HCT116 (cell line): ENCODE measurements at regions of chrX and their contacts with region 1.

Region 1: GRCh38 chrX:19887911-19888879 is 795 bp upstream of the SH3KBP1 start:
- DNase-seq: peak; percentile 53
- ATAC-seq: peak; percentile 76
- H3K4me3 ChIP-seq: peak overlapping the region; percentile 39 to 54
- H3K27ac ChIP-seq: peak overlapping the region; percentile 44; the same call in 1 of the 2 replicates
- H3K4me1 ChIP-seq: peaks cover 13 to 45% of the 10 kb centered on the region in 2 experiments
- H3K27me3 ChIP-seq: no peaks in the 10 kb centered on the region
- CTCF ChIP-seq: peak in 2 of 3 experiments; percentile 45 to 47; a peak in 3 of 6 replicates
- POLR2A ChIP-seq: no peak
- RAD21 ChIP-seq: no peak

Region 2: GRCh38 chrX:19535476-19535875 is 352.7 kb before region 1 on chrX:
- CTCF ChIA-PET with region 1: no interaction called
- POLR2A ChIA-PET with region 1: no interaction called
- RAD21 ChIA-PET with region 1: no interaction called
- intact Hi-C with region 1: loop called (anchors 10 kb)
- DNase-seq: no peak
- ATAC-seq: no peak
- H3K4me3 ChIP-seq: no peak overlapping the region
- H3K27ac ChIP-seq: no peak overlapping the region
- H3K4me1 ChIP-seq: no peaks in the 10 kb centered on the region
- H3K27me3 ChIP-seq: no peaks in the 10 kb centered on the region
- CTCF ChIP-seq: peak; percentile 12 to 27 (median 21); a peak in 3 of 6 replicates
- POLR2A ChIP-seq: no peak
- RAD21 ChIP-seq: peak; percentile 34; the same call in 1 of the 2 replicates

Region 3: DNA sequence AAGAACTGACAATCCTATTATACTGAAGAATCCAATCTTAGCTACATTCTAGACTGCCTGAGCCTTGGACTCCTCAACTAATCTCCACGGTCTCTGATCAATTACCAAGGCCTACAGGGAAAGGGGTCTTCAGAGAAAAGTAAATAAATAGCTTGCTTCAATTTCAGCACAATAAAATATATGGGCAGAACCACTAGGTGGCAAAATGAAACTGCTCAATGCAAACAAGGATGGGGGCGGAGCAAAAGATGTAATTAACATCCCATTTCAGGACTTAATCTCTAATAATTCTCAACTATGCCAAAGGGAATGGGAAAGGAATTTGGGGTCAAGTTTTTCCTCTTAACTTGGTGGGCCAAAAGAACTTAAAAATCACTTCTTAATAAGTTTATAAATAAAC is 294.5 kb before region 1 on chrX:
- CTCF ChIA-PET with region 1: interaction called, 5 read pairs
- POLR2A ChIA-PET with region 1: no interaction called
- RAD21 ChIA-PET with region 1: interaction called in 1 of 2 experiments, 3 read pairs
- intact Hi-C with region 1: loop called (anchors 5 kb)
- DNase-seq: peak; percentile 3
- ATAC-seq: no peak
- H3K4me3 ChIP-seq: no peak overlapping the region
- H3K27ac ChIP-seq: no peak overlapping the region
- H3K4me1 ChIP-seq: no peaks in the 10 kb centered on the region
- H3K27me3 ChIP-seq: no peaks in the 10 kb centered on the region
- CTCF ChIP-seq: peak; percentile 22 to 49 (median 45); a peak in 4 of 6 replicates
- POLR2A ChIP-seq: no peak
- RAD21 ChIP-seq: peak; percentile 69

Region 4: DNA sequence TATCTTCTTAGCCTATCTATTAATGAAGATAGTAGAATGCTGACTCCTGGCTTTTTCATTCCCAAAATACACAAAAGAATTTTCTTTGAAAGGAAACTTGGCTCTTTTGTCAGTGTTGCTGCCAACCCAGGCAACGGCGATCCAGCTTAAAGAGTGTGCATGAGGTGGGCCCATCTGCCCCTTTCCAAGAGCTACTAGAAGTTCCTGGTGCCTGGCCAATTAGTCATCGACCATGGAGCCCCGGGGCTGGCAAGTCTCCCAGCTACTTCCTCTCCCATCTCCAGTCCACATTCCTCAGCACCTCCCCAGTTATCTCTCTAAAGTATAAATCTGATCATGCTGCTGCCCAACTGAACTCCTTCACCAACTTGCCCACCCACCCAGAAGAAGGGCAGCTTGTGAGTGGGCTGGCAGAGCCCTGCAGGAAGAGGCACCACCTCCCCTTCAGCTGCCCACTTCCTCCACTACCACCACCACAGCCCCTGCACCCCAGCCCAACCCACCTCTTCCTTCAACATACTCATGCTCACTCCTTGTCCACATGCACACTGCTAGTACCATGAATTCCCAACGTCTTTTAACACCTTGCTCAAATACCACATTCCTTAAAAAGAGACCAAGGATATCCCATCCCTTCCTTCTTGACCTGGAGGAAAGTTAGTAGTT is 214.7 kb before region 1 on chrX:
- CTCF ChIA-PET with region 1: no interaction called
- POLR2A ChIA-PET with region 1: no interaction called
- RAD21 ChIA-PET with region 1: no interaction called
- intact Hi-C with region 1: loop called (anchors 5 kb)
- DNase-seq: peak; percentile 82
- ATAC-seq: peak; percentile 49
- H3K4me3 ChIP-seq: peak overlapping the region in 1 of 2 experiments; percentile 16; a peak in 1 of 4 replicates
- H3K27ac ChIP-seq: peak overlapping the region; percentile 93
- H3K4me1 ChIP-seq: peaks cover 39 to 66% of the 10 kb centered on the region in 2 experiments
- H3K27me3 ChIP-seq: no peaks in the 10 kb centered on the region
- CTCF ChIP-seq: no peak
- POLR2A ChIP-seq: no peak
- RAD21 ChIP-seq: no peak

Region 5: DNA sequence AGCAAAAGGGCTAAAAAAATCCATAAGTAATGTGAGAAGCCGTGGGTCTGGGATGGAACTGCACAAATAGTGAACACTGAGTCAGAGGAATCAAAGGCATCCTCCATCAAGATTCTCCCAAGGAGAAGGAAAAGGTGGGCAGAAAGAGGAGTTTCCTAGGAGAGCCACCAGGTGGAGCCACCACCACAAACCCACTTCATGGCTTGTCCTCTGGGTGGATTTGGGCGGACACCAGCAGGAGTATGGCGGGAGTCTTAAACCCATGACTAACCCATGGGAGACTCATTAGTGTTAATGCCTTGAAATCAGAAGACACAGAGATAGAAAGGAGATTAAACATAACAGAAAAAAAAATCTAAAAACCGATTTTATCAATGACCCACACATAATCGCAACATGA is 148.5 kb before region 1 on chrX:
- CTCF ChIA-PET with region 1: no interaction called
- POLR2A ChIA-PET with region 1: no interaction called
- RAD21 ChIA-PET with region 1: no interaction called
- intact Hi-C with region 1: loop called (anchors 2 kb)
- DNase-seq: peak; percentile 32
- ATAC-seq: peak; percentile 88
- H3K4me3 ChIP-seq: no peak overlapping the region
- H3K27ac ChIP-seq: no peak overlapping the region
- H3K4me1 ChIP-seq: no peaks in the 10 kb centered on the region
- H3K27me3 ChIP-seq: no peaks in the 10 kb centered on the region
- CTCF ChIP-seq: peak; percentile 62 to 65 (median 65)
- POLR2A ChIP-seq: no peak
- RAD21 ChIP-seq: peak; percentile 76

Region 6: DNA sequence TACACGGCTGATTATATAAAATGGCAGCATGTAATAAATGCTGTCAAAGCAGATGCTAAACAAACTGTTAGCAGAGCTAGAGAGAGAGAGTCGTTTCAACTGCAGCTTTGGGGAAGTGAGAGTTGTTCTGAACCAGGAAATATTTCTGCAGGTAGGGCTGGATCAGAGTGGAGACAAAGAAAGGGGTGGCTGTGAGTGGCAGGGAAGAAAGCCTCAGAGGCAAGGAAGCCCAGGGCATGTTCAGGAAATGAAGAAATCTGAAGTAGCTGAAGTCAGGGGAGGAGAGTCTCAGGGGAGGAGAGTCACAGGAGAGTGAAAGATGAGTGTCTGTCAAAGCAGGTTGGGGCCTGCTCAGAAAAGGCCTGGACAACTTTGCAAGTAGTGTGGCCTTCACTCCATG is 426.9 kb after region 1 on chrX:
- CTCF ChIA-PET with region 1: no interaction called
- POLR2A ChIA-PET with region 1: no interaction called
- RAD21 ChIA-PET with region 1: no interaction called
- intact Hi-C with region 1: no loop called
- DNase-seq: no peak
- ATAC-seq: no peak
- H3K4me3 ChIP-seq: no peak overlapping the region
- H3K27ac ChIP-seq: no peak overlapping the region
- H3K4me1 ChIP-seq: no peaks in the 10 kb centered on the region
- H3K27me3 ChIP-seq: no peaks in the 10 kb centered on the region
- CTCF ChIP-seq: no peak
- POLR2A ChIP-seq: no peak
- RAD21 ChIP-seq: no peak